K562 (cell line): ENCODE measurements at regions of chr13 and their contacts with region 1.

Region 1: GRCh38 chr13:33931397-33932311 is 113.7 kb downstream of the RFC3 start:
- DNase-seq: peak; percentile 6 to 48 (median 14)
- ATAC-seq: peak; percentile 83
- H3K4me3 ChIP-seq: no peak overlapping the region
- H3K27ac ChIP-seq: no peak overlapping the region
- H3K4me1 ChIP-seq: no peaks in the 10 kb centered on the region
- H3K27me3 ChIP-seq: no peaks in the 10 kb centered on the region
- CTCF ChIP-seq: peak in 2 of 3 experiments; percentile 18 to 47; a peak in 2 of 6 replicates
- EP300 ChIP-seq: no peak
- POLR2A ChIP-seq: no peak
- RAD21 ChIP-seq: peak; percentile 38 to 62

Region 2: DNA sequence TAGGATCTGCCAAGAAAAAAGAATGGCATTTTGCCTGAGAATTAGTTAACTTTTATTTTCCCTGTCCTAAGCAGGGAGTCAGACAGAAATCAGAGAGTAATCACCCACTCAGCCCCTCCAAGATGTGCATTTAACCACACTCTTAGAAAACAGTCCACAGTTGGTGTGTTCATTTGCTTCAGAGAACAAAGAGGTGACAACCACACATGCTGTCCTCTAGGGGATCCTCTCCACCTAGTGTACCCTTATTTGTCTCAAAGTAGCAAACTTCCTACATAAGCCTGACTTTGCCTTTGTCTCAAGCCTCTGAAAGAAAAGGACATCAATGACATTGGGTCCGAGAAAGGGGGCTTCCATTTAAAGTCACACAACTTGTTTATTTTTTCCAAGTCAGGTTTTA is 220.7 kb before region 1 on chr13:
- CTCF ChIA-PET with region 1: no interaction called
- POLR2A ChIA-PET with region 1: no interaction called
- in situ Hi-C with region 1: no loop called
- intact Hi-C with region 1: no loop called
- DNase-seq: no peak
- ATAC-seq: no peak
- H3K4me3 ChIP-seq: no peak overlapping the region
- H3K27ac ChIP-seq: no peak overlapping the region
- H3K4me1 ChIP-seq: no peaks in the 10 kb centered on the region
- H3K27me3 ChIP-seq: no peaks in the 10 kb centered on the region
- CTCF ChIP-seq: no peak
- EP300 ChIP-seq: no peak
- POLR2A ChIP-seq: no peak
- RAD21 ChIP-seq: no peak

Region 3: GRCh38 chr13:34107829-34108228 is 176.2 kb after region 1 on chr13:
- CTCF ChIA-PET with region 1: no interaction called
- POLR2A ChIA-PET with region 1: no interaction called
- in situ Hi-C with region 1: no loop called
- intact Hi-C with region 1: no loop called
- DNase-seq: no peak
- ATAC-seq: no peak
- H3K4me3 ChIP-seq: no peak overlapping the region
- H3K27ac ChIP-seq: no peak overlapping the region
- H3K4me1 ChIP-seq: no peaks in the 10 kb centered on the region
- H3K27me3 ChIP-seq: no peaks in the 10 kb centered on the region
- CTCF ChIP-seq: no peak
- EP300 ChIP-seq: no peak
- POLR2A ChIP-seq: no peak
- RAD21 ChIP-seq: no peak

Region 4: GRCh38 chr13:34469201-34470144 is 537.8 kb after region 1 on chr13:
- CTCF ChIA-PET with region 1: no interaction called
- POLR2A ChIA-PET with region 1: no interaction called
- in situ Hi-C with region 1: no loop called
- intact Hi-C with region 1: no loop called
- DNase-seq: no peak
- ATAC-seq: no peak
- H3K4me3 ChIP-seq: no peak overlapping the region
- H3K27ac ChIP-seq: no peak overlapping the region
- H3K4me1 ChIP-seq: no peaks in the 10 kb centered on the region
- H3K27me3 ChIP-seq: no peaks in the 10 kb centered on the region
- CTCF ChIP-seq: no peak
- EP300 ChIP-seq: no peak
- POLR2A ChIP-seq: no peak
- RAD21 ChIP-seq: no peak

Region 5: GRCh38 chr13:35157143-35157755 is 1225.6 kb after region 1 on chr13:
- CTCF ChIA-PET with region 1: no interaction called
- POLR2A ChIA-PET with region 1: no interaction called
- in situ Hi-C with region 1: loop called (anchors 25 kb)
- intact Hi-C with region 1: loop called (anchors 2 kb)
- DNase-seq: peak in 3 of 4 experiments; percentile 4 to 34 (median 6)
- ATAC-seq: no peak
- H3K4me3 ChIP-seq: no peak overlapping the region
- H3K27ac ChIP-seq: no peak overlapping the region
- H3K4me1 ChIP-seq: no peaks in the 10 kb centered on the region
- H3K27me3 ChIP-seq: no peaks in the 10 kb centered on the region
- CTCF ChIP-seq: peak in 2 of 3 experiments; percentile 22 to 47; a peak in 2 of 6 replicates
- EP300 ChIP-seq: no peak
- POLR2A ChIP-seq: no peak
- RAD21 ChIP-seq: peak; percentile 68 to 70

Region 6: GRCh38 chr13:35720690-35721554 is 1789.3 kb after region 1 on chr13:
- CTCF ChIA-PET with region 1: no interaction called
- POLR2A ChIA-PET with region 1: no interaction called
- in situ Hi-C with region 1: no loop called
- intact Hi-C with region 1: loop called (anchors 2 kb)
- DNase-seq: peak; percentile 48 to 76 (median 68)
- ATAC-seq: peak; percentile 85
- H3K4me3 ChIP-seq: no peak overlapping the region
- H3K27ac ChIP-seq: no peak overlapping the region
- H3K4me1 ChIP-seq: no peaks in the 10 kb centered on the region
- H3K27me3 ChIP-seq: no peaks in the 10 kb centered on the region
- CTCF ChIP-seq: peak; percentile 57 to 82 (median 63)
- EP300 ChIP-seq: no peak
- POLR2A ChIP-seq: no peak
- RAD21 ChIP-seq: peak; percentile 37 to 63; a peak in 3 of 4 replicates